AG04449 (cell line): ENCODE measurements at regions of chr9 and their contacts with region 1.

Region 1: GRCh38 chr9:124126571-124127289 is 115.2 kb downstream of the LHX2 start:
- DNase-seq: no peak
- H3K4me3 ChIP-seq: no peak overlapping the region
- CTCF ChIP-seq: peak; percentile 99

Region 2: DNA sequence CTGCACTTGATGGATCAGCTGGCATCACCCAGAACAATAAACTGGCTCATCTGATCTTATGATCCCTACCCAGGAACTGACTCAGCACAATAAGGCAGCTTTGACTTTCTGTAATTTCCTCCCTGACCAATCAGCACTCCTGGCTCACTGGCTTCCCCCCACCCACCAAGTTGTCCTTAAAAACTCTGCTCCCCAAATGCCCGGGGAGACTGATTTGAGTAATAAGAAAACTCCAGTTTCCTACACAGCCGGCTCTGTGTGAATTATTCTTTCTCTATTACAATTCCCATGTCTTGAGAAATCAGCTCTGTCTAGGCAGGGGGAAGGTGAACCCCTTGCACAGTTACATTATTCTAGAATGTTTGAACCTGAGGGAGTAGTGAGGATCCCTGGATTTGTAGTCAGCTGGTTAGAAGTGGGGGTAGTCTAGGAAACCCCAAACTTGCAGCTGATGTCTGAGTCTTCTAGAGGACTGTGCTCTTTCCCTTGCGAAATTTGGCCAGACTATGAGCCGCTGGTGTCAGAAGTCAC is 19.4 kb after region 1 on chr9:
- CTCF ChIA-PET with region 1: interaction called, 16 read pairs
- POLR2A ChIA-PET with region 1: no interaction called
- DNase-seq: no peak
- H3K4me3 ChIP-seq: no peak overlapping the region
- CTCF ChIP-seq: no peak

Region 3: DNA sequence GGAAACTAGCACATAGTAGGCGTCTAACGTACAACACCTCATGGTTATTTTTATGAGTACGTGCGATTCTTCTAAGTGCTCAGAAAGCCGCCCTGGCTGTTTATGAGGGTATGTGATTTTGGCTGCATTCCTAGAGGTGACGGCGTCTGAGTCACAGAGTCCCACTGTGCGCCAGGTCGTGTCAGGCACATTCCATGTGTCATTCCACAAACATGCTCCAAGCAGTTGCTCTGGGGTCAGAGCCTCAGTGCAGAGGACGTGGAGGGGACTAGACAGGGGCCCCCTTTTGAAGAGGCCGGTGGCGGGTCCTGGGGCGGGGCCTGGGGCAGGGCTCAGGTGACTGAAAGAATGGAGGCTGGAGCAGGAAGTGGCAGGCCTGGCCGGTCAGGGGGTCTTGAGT is 182.9 kb after region 1 on chr9:
- CTCF ChIA-PET with region 1: interaction called, 19 read pairs
- POLR2A ChIA-PET with region 1: no interaction called
- DNase-seq: peak; percentile 85
- H3K4me3 ChIP-seq: no peak overlapping the region
- CTCF ChIP-seq: no peak

Region 4: GRCh38 chr9:124330011-124330697 is 203.4 kb after region 1 on chr9:
- CTCF ChIA-PET with region 1: interaction called, 20 read pairs
- POLR2A ChIA-PET with region 1: no interaction called
- DNase-seq: no peak
- H3K4me3 ChIP-seq: no peak overlapping the region
- CTCF ChIP-seq: no peak

Region 5: GRCh38 chr9:124349675-124350493 is 223.2 kb after region 1 on chr9:
- CTCF ChIA-PET with region 1: interaction called, 20 read pairs
- POLR2A ChIA-PET with region 1: no interaction called
- DNase-seq: no peak
- H3K4me3 ChIP-seq: no peak overlapping the region
- CTCF ChIP-seq: no peak

Region 6: DNA sequence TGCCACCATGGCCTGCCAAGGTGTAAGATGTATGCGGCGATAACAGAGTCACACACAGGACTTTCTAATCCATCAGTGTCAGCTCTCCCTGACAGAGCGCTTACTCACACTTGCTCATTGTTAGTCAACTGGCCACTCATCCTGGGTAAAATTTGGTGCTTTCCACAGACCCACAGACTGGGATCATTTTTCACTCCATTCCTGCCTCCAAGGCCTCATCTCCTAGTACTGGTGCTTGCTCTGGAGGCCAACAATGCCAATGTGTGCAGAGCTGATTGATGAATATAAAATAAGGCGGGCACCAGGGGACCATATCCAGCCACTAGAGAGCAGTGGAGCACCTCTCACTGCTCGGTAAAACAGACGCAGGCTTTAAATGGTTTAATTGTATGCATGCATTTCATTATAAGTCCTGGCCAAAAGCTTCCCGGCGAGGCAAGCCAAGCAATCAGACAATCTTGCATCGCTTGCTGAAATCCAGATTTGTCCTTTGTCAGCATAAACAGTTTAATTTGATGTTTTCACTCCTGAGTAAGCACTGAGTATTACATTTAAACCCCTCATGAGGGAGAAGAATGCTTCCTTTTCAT is 266.2 kb after region 1 on chr9:
- CTCF ChIA-PET with region 1: interaction called, 93 read pairs
- POLR2A ChIA-PET with region 1: no interaction called
- DNase-seq: peak; percentile 63
- H3K4me3 ChIP-seq: no peak overlapping the region
- CTCF ChIP-seq: peak; percentile 55

Region 7: GRCh38 chr9:124868511-124869465 is 742.1 kb after region 1 on chr9:
- CTCF ChIA-PET with region 1: no interaction called
- POLR2A ChIA-PET with region 1: no interaction called
- DNase-seq: no peak
- H3K4me3 ChIP-seq: peak overlapping the region; percentile 90
- CTCF ChIP-seq: peak; percentile 29